Activated T-helper 2 cell treated with anti-CD3 and anti-CD28 coated beads, Interferon-gamma antibody, Interleukin-2, Interleukin-4, amounts not matched to agents 10 μg/mL and 5 μg/mL and 100 μg/mL, durations not matched to agents 14 hours and 24 hours and 36 hours (primary cell): ENCODE measurements at regions of chr2 and their contacts with region 1.

Region 1: DNA sequence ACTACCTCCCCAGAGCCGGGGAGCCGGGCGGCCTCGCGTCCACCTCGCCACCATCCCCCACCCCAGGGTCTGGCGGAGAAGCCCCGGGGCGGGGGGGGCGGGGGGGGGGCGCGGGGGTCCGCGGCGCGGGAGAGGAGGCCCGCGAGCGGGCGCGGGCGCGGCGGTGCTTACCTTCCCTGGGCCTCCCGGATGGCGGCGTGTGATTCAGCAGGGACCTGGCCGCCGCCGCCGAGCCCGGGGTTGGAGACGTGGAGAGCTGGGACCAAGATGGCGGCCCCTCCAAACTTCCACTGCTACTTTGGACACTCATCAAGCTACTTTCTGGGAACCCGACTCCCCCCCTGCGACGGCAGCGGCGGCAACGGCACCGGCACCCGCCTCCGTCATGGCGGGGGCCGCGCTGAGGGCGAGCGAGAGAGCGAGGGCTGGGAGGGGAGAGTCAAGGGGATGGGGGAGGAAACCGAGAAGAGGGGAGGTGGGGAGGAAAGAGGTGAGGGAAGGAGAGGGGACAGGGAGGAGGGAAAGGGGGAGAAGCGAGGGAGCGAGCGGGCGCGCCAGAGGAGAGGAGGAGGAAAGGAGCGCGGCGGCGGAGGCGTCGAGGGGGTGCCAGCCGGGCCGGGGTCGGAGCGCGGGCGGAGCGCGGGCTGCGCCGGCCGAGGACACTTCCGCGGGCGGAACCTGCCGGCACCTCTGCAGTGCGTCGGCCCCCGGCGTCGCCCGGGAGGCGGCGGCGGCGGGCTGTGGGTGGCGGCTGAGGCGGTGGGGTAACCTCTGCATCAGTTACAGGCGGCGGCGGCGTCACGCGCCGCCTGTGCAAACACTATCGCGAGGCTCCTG is at the start of gene TLK1:
- DNase-seq: peak; percentile 75
- H3K4me3 Mint-ChIP-seq: peak within 1 kb of the TSS; percentile 98
- H3K27ac Mint-ChIP-seq: peak within 1 kb of the TSS; percentile 95
- H3K4me1 Mint-ChIP-seq: peaks cover 60% of the 10 kb centered on the region
- H3K27me3 Mint-ChIP-seq: no peaks in the 10 kb centered on the region
- total RNA-seq, gene TLK1: 81.7 and 86.1 TPM in 2 replicates

Region 2: GRCh38 chr2:170973492-170974303 is 186.6 kb before region 1 on chr2:
- intact Hi-C with region 1: loop called (anchors 1 kb)
- DNase-seq: peak; percentile 75
- H3K4me3 Mint-ChIP-seq: peak overlapping the region; percentile 76
- H3K27ac Mint-ChIP-seq: peak overlapping the region; percentile 63
- H3K4me1 Mint-ChIP-seq: peaks cover 10% of the 10 kb centered on the region
- H3K27me3 Mint-ChIP-seq: no peaks in the 10 kb centered on the region

Region 3: DNA sequence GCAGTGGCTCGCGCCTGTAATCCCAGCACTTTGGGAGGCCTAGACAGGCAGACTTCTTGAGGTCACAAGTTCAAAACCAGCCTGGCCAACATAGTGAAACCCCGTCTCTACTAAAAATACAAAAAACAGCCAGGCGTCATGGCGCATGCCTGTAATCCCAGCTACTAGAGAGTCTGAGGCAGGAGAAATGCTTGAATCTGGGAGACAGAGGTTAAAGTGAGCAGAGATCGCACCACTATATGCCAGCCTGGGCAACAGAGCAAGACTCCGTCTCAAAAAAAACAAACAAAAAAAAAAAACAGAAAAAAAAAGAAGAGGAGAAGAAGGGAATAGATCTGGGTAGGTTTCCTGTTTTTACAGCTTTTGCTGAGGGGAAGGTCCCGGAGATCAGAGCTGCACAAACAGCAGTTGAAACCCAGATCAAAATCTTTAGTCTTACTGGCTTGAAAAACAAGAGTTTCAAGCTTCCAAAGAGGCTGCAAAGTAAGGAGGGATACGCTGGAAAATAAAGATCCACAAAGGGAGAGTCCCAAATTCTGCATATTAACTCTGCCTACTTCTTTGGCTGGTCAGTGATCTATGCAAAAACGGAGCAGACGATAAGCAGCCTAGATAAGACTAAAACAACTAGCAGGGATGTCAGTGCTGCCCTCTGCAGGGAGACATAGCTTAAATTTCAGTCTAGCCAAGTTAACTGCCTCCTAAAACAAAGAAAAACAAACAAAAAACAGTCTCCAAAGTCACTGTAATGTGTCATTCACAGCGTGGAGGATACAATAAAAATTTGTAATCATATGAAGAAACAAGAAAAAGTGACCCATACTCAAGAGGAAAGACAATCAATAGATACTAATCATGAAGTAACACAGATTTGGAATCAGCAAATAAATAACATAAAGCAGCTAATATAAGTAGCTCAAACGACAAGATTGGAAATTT is 73.7 kb before region 1 on chr2:
- intact Hi-C with region 1: loop called (anchors 2 kb)
- DNase-seq: peak; percentile 33
- H3K4me3 Mint-ChIP-seq: peak overlapping the region; percentile 78
- H3K27ac Mint-ChIP-seq: peak overlapping the region; percentile 69
- H3K4me1 Mint-ChIP-seq: peaks cover 61% of the 10 kb centered on the region
- H3K27me3 Mint-ChIP-seq: no peaks in the 10 kb centered on the region

Region 4: DNA sequence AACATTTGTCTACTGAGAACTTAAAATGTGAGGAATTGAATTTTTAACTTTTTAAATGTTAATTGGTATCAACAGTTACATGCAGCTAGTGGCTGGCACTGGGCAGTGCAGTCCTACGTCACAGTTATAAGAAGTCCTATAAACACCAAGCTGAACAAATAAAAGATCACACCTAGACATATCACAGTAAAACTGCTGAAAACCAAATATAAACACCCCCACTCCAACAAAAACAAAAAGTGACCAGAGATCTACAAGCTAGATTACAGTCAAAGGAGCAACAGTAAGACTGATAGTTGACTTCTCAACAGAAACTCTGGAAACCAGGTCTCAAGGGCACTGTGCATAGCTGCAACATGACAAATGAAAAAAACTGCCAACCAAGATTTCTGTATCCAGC is 19.0 kb before region 1 on chr2:
- intact Hi-C with region 1: loop called (anchors 2 kb)
- DNase-seq: no peak
- H3K4me3 Mint-ChIP-seq: no peak overlapping the region
- H3K27ac Mint-ChIP-seq: no peak overlapping the region
- H3K4me1 Mint-ChIP-seq: peaks cover 52% of the 10 kb centered on the region
- H3K27me3 Mint-ChIP-seq: no peaks in the 10 kb centered on the region

Region 5: DNA sequence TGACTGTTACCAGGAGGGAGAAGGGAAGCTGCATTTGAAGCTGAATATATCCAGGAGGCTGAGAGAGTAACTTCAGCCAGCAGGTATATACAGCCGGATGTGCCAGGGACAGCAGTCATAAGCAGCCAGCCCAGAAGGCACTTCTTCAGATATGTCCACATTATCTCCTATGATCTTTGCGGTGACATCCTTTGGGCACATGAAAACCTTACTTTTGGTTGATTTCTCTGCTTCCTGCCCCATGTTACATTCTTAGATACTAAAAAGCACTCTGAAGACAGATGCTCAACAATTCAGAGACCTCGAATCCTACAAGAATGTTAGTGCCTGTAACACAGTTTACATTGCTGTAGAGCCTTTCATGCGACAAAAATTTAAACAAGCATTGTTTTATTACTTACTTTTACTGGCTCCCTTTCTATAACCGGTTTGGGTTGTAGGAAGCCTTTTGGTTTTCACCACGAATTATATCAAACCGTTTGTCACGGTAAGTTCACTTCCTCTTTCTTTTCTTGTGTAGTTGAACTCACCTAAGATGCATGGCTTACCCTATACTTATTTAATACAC is 50.6 kb after region 1 on chr2:
- intact Hi-C with region 1: loop called (anchors 2 kb)
- DNase-seq: peak; percentile 54
- H3K4me3 Mint-ChIP-seq: peak overlapping the region; percentile 45
- H3K27ac Mint-ChIP-seq: peak overlapping the region; percentile 75
- H3K4me1 Mint-ChIP-seq: peaks cover 38% of the 10 kb centered on the region
- H3K27me3 Mint-ChIP-seq: no peaks in the 10 kb centered on the region

Region 6: DNA sequence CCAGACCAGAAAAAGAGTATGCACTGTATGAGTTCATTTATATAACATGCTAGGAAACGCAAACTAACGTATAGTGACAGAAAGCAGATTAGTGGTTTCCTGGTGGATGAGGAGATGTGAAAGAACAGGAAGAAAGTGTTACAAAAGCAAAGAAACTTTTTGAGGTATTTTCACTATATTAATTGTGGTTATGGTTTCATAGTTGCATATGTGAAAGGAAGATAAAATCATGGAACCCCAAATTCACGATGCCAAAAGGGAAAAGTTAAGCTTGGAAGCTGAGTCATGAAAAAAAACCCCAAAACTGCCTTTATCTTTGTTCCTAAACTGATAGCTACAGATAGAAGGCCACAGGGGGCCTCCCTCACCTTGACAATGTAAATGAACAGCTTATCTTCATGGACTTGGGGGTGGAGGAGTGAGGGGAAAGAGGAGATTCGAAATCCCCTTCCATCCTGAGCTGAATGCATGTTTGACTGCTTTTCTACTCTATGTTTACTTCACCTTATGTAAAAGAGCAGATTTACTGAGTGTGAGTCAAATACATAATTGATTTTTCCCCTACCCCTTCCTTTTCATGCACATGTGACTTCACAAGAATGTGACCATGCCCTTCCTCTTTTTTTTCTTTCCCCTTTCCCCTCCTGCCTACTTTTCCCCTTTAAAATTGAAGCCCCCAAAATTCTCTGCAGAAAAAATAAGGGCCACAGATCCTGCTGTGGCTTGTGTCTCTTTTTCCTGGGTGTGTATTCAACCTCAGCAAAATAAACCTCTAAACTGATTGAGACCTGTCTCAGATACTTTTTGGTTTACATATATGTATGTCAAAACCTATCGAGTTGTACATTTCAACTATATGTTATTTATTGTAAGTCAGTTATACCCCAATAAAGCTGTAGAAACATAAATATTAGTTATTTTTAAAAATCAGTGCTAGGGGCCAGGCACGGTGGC is 100.4 kb after region 1 on chr2:
- intact Hi-C with region 1: loop called (anchors 1 kb)
- DNase-seq: no peak
- H3K4me3 Mint-ChIP-seq: no peak overlapping the region
- H3K27ac Mint-ChIP-seq: peak overlapping the region; percentile 51
- H3K4me1 Mint-ChIP-seq: peaks cover 33% of the 10 kb centered on the region
- H3K27me3 Mint-ChIP-seq: peaks cover 2% of the 10 kb centered on the region

Region 7: DNA sequence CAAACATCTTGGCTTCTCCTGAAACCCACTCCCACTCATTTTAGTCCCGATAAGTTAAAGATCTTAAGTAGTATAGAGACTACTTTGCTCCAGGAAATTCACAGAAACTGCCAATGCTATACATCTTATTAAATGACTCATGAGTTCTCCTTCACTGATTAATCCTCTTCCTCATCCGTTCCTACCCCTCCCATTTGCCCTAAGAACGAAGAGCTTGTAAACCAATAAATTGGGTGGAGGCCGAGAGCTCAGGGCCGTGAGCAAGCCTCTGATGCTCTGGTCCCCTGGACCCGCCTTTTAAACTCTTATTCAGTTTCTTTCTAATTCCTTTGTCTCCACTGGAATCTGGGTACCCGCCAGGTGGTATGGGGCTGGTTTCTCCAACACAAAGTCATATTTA is 204.9 kb after region 1 on chr2:
- intact Hi-C with region 1: no loop called
- DNase-seq: no peak
- H3K4me3 Mint-ChIP-seq: no peak overlapping the region
- H3K27ac Mint-ChIP-seq: no peak overlapping the region
- H3K4me1 Mint-ChIP-seq: peaks cover 12% of the 10 kb centered on the region
- H3K27me3 Mint-ChIP-seq: no peaks in the 10 kb centered on the region

Region 8: GRCh38 chr2:171433763-171434670 is 273.7 kb after region 1 on chr2 and contains the starts of genes DCAF17 and METTL8:
- intact Hi-C with region 1: loop called (anchors 1 kb)
- DNase-seq: peak; percentile 93
- H3K4me3 Mint-ChIP-seq: peak within 1 kb of the TSS; percentile 89
- H3K27ac Mint-ChIP-seq: peak within 1 kb of the TSS; percentile 91
- H3K4me1 Mint-ChIP-seq: peaks cover 32% of the 10 kb centered on the region
- H3K27me3 Mint-ChIP-seq: no peaks in the 10 kb centered on the region
- total RNA-seq, gene DCAF17: 22.6 and 23.7 TPM in 2 replicates
- total RNA-seq, gene METTL8: 38.2 and 39.9 TPM in 2 replicates